ENCODE measurements at regions of chr4 and their contacts with region 1.

Region 1: DNA sequence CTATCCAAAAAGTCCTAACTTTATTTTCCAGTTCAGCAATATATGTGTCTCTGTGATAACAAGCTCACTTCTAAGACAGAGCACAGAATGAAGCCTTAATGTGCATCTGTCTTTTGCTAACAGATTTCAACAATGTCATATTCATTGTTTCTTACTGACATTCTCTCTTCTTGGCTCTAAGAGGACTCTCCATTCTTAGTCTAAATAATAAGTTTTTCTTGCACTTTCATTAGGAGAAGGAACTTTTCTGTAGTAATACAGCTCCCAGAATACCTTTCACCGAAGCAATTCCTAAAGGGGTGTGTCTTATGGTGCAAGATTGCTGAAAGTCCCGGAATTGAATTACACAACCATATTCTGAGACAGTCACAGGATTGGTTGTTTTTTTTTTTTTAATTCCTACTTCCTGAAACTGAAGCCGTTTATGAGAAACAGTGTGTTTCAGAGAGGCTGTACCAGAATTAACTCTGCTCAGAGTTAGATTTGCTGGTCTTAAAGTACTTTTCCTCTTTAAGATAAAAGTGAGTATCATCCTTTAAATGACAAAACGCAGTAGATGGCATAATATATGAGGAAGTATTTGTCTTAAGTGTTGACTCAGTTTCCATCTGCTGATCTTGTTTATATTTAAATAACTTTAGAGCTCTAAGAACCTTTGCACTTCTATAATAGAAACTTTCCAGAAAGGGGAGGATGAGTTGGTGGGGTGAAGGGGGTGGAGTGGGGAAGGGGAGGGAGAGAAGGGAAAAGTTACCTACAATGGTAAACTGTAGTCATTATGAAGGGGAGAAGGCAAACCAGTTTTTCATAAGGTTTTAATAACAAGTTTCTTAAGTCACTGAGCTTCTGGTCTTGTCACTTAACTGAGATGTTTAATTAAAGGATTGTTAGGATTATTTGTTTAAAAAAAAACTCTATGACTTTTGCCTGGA is at the start of gene ALPK1:
- DNase-seq: peak; percentile 81
- H3K4me3 ChIP-seq: peak within 1 kb of the TSS; percentile 71
- H3K27ac ChIP-seq: peak within 1 kb of the TSS; percentile 62
- H3K4me1 ChIP-seq: peaks cover 33% of the 10 kb centered on the region
- CTCF ChIP-seq: no peak
- total RNA-seq, gene ALPK1: 22.5 and 33.7 TPM in 2 replicates

Region 2: GRCh38 chr4:112279025-112279881 is 18.0 kb before region 1 on chr4:
- CTCF ChIA-PET with region 1: interaction called, 3 read pairs
- POLR2A ChIA-PET with region 1: interaction called, 21 read pairs
- intact Hi-C with region 1: no loop called
- DNase-seq: peak; percentile 63
- H3K4me3 ChIP-seq: peak overlapping the region; percentile 67
- H3K27ac ChIP-seq: peak overlapping the region; percentile 75
- H3K4me1 ChIP-seq: peaks cover 58% of the 10 kb centered on the region
- CTCF ChIP-seq: no peak